ENCODE measurements at regions of chr5 and their contacts with region 1.

Region 1: GRCh38 chr5:141412854-141413539 is at the start of gene PCDHGA10:
- DNase-seq: peak in 1 of 2 experiments; percentile 67
- H3K4me3 ChIP-seq: peak within 1 kb of the TSS; percentile 66 to 82 (median 78)
- H3K27ac ChIP-seq: no peak within 1 kb of the TSS
- H3K4me1 ChIP-seq: no peaks in the 10 kb centered on the region
- H3K27me3 ChIP-seq: peaks cover 0 to 10% (median 6%) of the 10 kb centered on the region in 4 experiments; a peak in 6 of 7 replicates
- CTCF ChIP-seq: peak; percentile 35 to 84 (median 74)
- EP300 ChIP-seq: no peak
- POLR2A ChIP-seq: 0 out of 3 replicates have a peak, but pooled peaks of 1 of the 2 experiments have one; percentile 24
- RAD21 ChIP-seq: peak; percentile 84
- total RNA-seq, gene PCDHGA10: 2.1 and 2.2 TPM in 2 replicates

Region 2: GRCh38 chr5:141208478-141208877 is 204.5 kb before region 1 on chr5 and contains the start of gene PCDHB12:
- CTCF ChIA-PET with region 1: interaction called, 10 read pairs
- POLR2A ChIA-PET with region 1: no interaction called
- DNase-seq: no peak
- H3K4me3 ChIP-seq: peak within 1 kb of the TSS in 2 of 4 experiments; percentile 10 to 34; a peak in 2 of 8 replicates
- H3K27ac ChIP-seq: no peak within 1 kb of the TSS
- H3K4me1 ChIP-seq: no peaks in the 10 kb centered on the region
- H3K27me3 ChIP-seq: no peaks in the 10 kb centered on the region
- CTCF ChIP-seq: peak in 2 of 3 experiments; percentile 11 to 48; a peak in 3 of 4 replicates
- EP300 ChIP-seq: no peak
- POLR2A ChIP-seq: no peak
- RAD21 ChIP-seq: peak; percentile 42 to 45
- total RNA-seq, gene PCDHB12: 2.0 and 3.0 TPM in 2 replicates

Region 3: DNA sequence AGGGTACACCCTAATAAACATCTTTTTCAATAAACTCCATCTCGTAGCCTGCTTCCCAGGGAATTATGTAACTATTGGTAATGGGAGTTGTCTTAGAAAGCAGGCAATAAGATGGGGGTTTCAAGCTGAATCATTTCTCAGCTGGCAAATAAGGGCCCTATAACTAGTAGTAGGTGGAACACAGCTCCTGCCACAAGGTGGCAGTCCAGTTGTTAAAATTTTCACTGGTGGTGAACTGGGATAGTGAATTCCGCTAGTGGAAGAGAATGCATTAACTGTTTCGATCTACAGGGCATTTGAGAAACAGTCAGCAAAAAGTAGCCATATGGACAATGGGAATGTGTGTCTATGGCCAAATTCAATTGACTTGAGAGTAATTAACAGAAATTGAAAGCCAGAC is 140.1 kb before region 1 on chr5:
- CTCF ChIA-PET with region 1: interaction called, 11 read pairs
- POLR2A ChIA-PET with region 1: no interaction called
- DNase-seq: peak; percentile 3 to 44
- H3K4me3 ChIP-seq: no peak overlapping the region
- H3K27ac ChIP-seq: no peak overlapping the region
- H3K4me1 ChIP-seq: no peaks in the 10 kb centered on the region
- H3K27me3 ChIP-seq: no peaks in the 10 kb centered on the region
- CTCF ChIP-seq: peak in 2 of 3 experiments; percentile 41 to 49; a peak in 2 of 4 replicates
- EP300 ChIP-seq: no peak
- POLR2A ChIP-seq: no peak
- RAD21 ChIP-seq: peak; percentile 37 to 49; a peak in 3 of 4 replicates

Region 4: DNA sequence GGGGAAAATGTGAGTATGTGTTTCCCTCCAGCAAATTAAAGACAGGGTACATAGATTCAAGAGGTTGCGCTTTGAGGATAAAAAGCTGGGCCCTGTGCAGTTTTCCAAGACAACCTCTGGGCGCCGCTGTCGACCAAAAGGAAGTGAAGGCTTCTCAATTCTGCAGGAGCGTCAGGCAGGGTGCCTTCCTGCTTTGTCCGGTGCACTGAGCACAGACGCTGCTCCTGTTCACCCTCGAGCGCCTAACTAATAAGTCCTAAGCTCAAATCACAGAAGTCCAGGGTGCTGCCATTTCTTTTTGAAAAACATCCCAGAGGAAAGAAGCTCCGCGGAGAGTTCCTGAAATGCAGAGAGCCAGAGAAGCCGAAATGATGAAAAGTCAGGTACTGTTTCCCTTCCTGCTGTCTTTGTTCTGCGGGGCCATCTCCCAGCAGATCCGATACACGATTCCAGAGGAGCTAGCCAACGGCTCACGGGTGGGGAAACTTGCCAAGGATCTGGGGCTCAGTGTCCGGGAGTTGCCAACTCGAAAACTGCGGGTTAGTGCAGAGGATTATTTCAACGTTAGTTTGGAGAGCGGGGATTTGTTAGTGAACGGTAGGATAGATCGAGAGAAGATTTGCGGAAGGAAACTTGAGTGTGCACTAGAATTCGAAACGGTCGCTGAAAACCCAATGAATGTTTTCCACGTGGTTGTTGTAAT is 62.9 kb before region 1 on chr5 and contains the start of gene PCDHGB1:
- CTCF ChIA-PET with region 1: interaction called, 28 read pairs
- POLR2A ChIA-PET with region 1: interaction called, 3 read pairs
- DNase-seq: peak in 1 of 2 experiments; percentile 83
- H3K4me3 ChIP-seq: peak within 1 kb of the TSS; percentile 17 to 53 (median 31); a peak in 7 of 8 replicates
- H3K27ac ChIP-seq: no peak within 1 kb of the TSS
- H3K4me1 ChIP-seq: peaks cover 0 to 5% (median under 1%) of the 10 kb centered on the region in 4 experiments; a peak in 1 of 7 replicates
- H3K27me3 ChIP-seq: no peaks in the 10 kb centered on the region
- CTCF ChIP-seq: peak; percentile 69 to 86 (median 75)
- EP300 ChIP-seq: no peak
- POLR2A ChIP-seq: peak in 1 of 2 experiments; percentile 65; a peak in 1 of 3 replicates
- RAD21 ChIP-seq: peak; percentile 74 to 81
- total RNA-seq, gene PCDHGB1: 2.8 and 3.9 TPM in 2 replicates

Region 5: DNA sequence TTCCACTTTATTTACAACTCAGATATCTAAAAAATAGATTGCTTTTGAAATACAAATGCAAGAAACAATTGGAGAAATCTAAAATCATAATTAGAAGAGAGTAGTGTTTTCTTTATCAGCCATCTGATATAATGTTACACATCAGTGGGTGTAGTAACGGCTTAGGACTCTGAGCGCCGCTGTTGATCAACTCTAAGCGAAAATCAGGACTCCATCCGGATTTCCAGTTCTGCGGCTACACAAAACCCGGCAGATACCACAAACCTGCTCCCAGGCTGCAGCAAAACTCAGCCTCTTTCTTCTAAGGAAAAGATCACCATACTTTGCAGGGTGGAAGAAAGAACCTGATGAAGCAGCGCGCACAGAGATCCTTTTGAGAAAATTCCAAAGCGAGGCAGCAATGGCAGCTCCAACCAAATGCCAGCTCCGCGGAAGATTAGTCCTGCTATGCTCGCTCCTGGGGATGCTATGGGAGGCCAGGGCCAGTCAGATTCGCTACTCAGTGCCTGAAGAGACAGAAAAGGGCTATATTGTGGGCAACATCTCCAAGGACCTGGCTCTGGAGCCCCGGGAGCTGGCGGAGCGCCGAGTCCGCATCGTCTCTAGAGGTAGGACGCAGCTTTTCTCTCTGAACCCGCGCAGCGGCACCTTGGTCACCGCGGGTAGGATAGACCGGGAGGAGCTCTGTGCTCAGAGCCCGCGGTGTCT is 10.3 kb before region 1 on chr5 and contains the start of gene PCDHGA9:
- CTCF ChIA-PET with region 1: interaction called, 51 read pairs
- POLR2A ChIA-PET with region 1: no interaction called
- DNase-seq: no peak
- H3K4me3 ChIP-seq: no peak within 1 kb of the TSS
- H3K27ac ChIP-seq: no peak within 1 kb of the TSS
- H3K4me1 ChIP-seq: no peaks in the 10 kb centered on the region
- H3K27me3 ChIP-seq: no peaks in the 10 kb centered on the region
- CTCF ChIP-seq: peak in 2 of 3 experiments; percentile 21 to 35; a peak in 3 of 4 replicates
- EP300 ChIP-seq: no peak
- POLR2A ChIP-seq: no peak
- RAD21 ChIP-seq: peak; percentile 33 to 46
- total RNA-seq, gene PCDHGA9: 1.1 and 1.2 TPM in 2 replicates

Region 6: GRCh38 chr5:141484641-141485311 is 71.8 kb after region 1 on chr5 and contains the start of gene PCDHGC4:
- CTCF ChIA-PET with region 1: interaction called, 1,236 read pairs
- POLR2A ChIA-PET with region 1: no interaction called
- DNase-seq: peak in 1 of 2 experiments; percentile 84
- H3K4me3 ChIP-seq: peak within 1 kb of the TSS; percentile 56 to 78 (median 69)
- H3K27ac ChIP-seq: peak within 1 kb of the TSS; percentile 5; the same call in 1 of the 2 replicates
- H3K4me1 ChIP-seq: peaks cover 5 to 20% (median 12%) of the 10 kb centered on the region in 4 experiments
- H3K27me3 ChIP-seq: peaks cover 7 to 19% (median 16%) of the 10 kb centered on the region in 4 experiments
- CTCF ChIP-seq: peak in 1 of 3 experiments; percentile 5; a peak in 1 of 4 replicates
- EP300 ChIP-seq: no peak
- POLR2A ChIP-seq: peak in 1 of 2 experiments; percentile 57; a peak in 1 of 3 replicates
- RAD21 ChIP-seq: peak in 1 of 2 experiments; percentile 10; a peak in 1 of 4 replicates
- total RNA-seq, gene PCDHGC4: 2.4 and 2.6 TPM in 2 replicates

Measured in H1 (cell line).